IMR-90 (cell line): ENCODE measurements at regions of chr17 and their contacts with region 1.

Region 1: DNA sequence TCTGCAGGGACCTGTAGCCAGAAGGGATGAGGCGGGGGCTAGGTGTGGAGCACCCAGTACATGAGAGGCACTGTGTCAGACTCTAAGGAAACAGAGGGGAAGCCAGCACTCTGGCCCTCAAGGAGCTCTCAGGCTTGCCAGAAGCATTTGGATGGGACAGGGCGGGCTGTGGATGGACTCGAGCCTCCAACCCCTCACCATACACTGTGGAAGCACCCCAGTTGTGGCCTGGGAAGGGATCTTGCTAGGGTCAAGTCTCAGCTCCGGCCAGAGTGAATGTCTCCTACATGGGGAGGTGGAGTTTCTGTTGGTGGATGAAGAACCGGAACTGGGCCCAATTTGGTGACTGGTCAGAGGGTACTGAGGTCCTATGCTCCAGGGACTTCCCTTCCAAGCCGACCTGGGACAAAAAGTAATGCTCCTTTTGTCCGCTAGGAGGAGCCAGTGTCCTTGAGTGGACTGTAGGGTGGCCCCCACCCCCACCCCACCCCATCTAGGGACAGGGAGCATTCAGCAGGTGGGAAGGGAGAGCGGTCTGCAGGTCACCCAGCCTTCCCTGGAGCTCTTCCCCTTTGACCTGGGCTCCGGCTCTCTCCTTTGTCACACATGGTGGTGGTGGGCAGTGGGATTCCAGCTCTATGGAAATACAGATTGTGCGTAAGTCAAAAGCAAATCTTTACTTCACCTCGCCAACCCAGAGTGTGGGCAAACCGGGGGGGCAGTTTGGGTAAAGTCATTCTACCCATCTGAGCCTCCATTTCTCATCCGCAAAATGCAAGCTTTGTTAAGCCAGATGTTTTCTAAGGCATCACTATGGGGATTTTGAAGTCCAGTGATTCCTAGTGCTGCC is 20.4 kb upstream of the PHB1 start:
- DNase-seq: peak; percentile 41
- ATAC-seq: peak; percentile 93
- H3K4me3 ChIP-seq: no peak overlapping the region
- H3K27ac ChIP-seq: no peak overlapping the region
- H3K4me1 ChIP-seq: peaks cover 3% of the 10 kb centered on the region; the same call in 1 of the 2 replicates
- H3K27me3 ChIP-seq: peaks cover 44% of the 10 kb centered on the region
- CTCF ChIP-seq: peak; percentile 67
- POLR2A ChIP-seq: no peak
- RAD21 ChIP-seq: peak; percentile 77

Region 2: DNA sequence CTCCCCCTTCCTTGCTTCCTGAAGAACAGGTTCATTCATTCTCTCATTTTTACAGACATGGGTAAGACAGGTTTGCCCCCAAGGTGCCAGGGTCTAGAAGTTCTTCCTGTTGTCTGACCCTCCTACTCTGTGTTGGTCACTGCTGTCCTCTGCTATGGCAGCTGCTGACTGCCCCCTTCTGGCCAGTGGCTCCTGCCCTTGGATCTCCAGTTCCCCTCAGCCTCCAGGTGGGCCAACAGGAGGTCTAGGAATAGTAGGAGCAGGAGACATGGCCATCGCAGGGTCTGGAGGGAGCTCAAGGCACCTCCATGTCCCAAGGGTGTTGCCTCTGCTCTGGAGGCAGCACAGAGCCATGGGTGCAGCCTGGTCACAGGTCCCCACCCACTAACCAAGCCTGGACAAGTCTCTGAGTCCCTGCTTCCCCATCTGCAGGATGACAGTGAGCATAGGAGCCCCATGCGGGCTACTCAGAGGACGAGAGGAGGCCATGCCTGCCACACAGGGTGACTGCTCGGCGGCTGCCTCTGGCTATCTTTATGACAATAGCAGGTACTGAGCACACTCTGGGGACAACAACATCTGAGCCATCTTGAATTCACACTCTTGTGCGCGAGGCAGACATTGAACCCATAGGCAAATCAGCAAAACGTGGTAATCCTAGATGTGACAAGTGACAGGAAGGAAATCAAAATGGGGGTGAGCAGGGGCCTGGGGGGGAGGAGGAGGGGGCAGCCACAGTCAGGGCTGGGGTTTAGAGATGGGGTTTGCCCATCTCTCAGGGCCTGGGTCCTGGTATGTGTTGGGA is 113.7 kb after region 1 on chr17:
- CTCF ChIA-PET with region 1: no interaction called
- POLR2A ChIA-PET with region 1: no interaction called
- dilution Hi-C with region 1: no loop called
- in situ Hi-C with region 1: loop called (anchors 5 kb)
- intact Hi-C with region 1: loop called (anchors 1 kb)
- DNase-seq: peak; percentile 30
- ATAC-seq: peak; percentile 79
- H3K4me3 ChIP-seq: no peak overlapping the region
- H3K27ac ChIP-seq: no peak overlapping the region
- H3K4me1 ChIP-seq: no peaks in the 10 kb centered on the region
- H3K27me3 ChIP-seq: peaks cover 57% of the 10 kb centered on the region
- CTCF ChIP-seq: peak; percentile 63
- POLR2A ChIP-seq: no peak
- RAD21 ChIP-seq: peak; percentile 78